ENCODE measurements at regions of chr10 and their contacts with region 1.

Region 1: GRCh38 chr10:52488606-52489485 is 174.8 kb downstream of the DKK1 start:
- DNase-seq: peak; percentile 42

Region 2: DNA sequence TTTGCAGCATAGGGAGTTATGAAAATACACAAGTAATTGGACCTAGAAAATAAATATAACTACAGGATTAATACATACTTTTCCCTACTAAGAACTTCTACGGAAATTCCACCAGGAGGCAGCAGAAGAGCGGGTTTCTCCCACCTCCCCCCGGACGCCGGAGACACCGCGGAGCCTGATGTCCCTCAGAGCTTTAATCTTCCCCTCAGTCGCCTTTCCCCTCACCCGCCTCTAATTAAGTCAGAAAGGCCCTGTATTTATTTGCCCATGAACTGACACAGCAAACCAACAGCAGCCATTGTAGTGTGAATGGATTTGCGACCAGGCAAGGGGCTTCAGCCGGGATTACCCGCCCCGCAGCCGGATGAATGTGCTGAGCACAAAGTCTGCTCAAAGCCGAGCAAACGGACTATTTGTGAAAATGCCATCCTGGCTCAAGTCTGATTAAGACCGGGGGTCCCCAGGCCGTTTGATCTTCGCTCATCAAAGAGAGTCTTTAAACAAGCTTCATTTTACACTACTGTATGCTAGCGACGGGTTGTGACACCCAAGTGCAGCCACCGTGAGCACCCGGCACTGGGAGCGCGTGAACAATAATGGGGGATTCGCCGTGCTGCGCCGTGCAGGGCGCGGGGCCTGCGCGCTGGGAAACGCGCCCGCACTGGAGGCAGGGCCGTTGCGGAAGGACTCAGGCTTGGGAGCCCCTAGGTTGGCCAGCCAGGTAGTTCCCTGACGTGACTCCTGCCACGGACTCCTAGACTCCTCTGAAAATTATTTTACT is 180.4 kb before region 1 on chr10:
- in situ Hi-C with region 1: loop called (anchors 25 kb)
- DNase-seq: peak; percentile 37